Heart left ventricle (tissue), 16 donors: ENCODE measurements at regions of chr7 and their contacts with region 1.

Region 1: GRCh38 chr7:41940760-41941343 is 238.0 kb upstream of the INHBA start:
- DNase-seq: peak in 4 of 5 donors; percentile 57 to 61 (median 58)
- ATAC-seq: peak; percentile 70 to 86 (median 82)
- H3K4me3 ChIP-seq: no peak overlapping the region
- H3K27ac ChIP-seq: no peak overlapping the region
- H3K4me1 ChIP-seq: peaks cover 0 to 13% (median 5%) of the 10 kb centered on the region in 12 donors
- H3K27me3 ChIP-seq: peaks cover 0 to 18% (median 9%) of the 10 kb centered on the region in 9 donors
- CTCF ChIP-seq: peak; percentile 83 to 96 (median 90)
- POLR2A ChIP-seq: peak in 1 of 2 donors; percentile 3

Region 2: GRCh38 chr7:41900532-41900931 is 40.3 kb before region 1 on chr7:
- intact Hi-C with region 1: no loop called
- DNase-seq: no peak
- ATAC-seq: no peak
- H3K4me3 ChIP-seq: no peak overlapping the region
- H3K27ac ChIP-seq: no peak overlapping the region
- H3K4me1 ChIP-seq: no peaks in the 10 kb centered on the region
- H3K27me3 ChIP-seq: no peaks in the 10 kb centered on the region
- CTCF ChIP-seq: no peak
- POLR2A ChIP-seq: no peak

Region 3: GRCh38 chr7:42311195-42311594 is 370.3 kb after region 1 on chr7:
- intact Hi-C with region 1: loop called in 1 of 10 experiments (anchors 10 kb)
- DNase-seq: no peak
- ATAC-seq: no peak
- H3K4me3 ChIP-seq: no peak overlapping the region
- H3K27ac ChIP-seq: no peak overlapping the region
- H3K4me1 ChIP-seq: peaks cover 0 to 2% (median 0%) of the 10 kb centered on the region in 12 donors
- H3K27me3 ChIP-seq: no peaks in the 10 kb centered on the region
- CTCF ChIP-seq: no peak
- POLR2A ChIP-seq: no peak

Region 4: GRCh38 chr7:42574685-42575084 is 633.8 kb after region 1 on chr7:
- intact Hi-C with region 1: loop called in 2 of 10 experiments (anchors 10 kb)
- DNase-seq: no peak
- ATAC-seq: no peak
- H3K4me3 ChIP-seq: no peak overlapping the region
- H3K27ac ChIP-seq: peak overlapping the region in 1 of 12 donors; percentile 48
- H3K4me1 ChIP-seq: no peaks in the 10 kb centered on the region
- H3K27me3 ChIP-seq: no peaks in the 10 kb centered on the region
- CTCF ChIP-seq: peak in 4 of 12 donors; percentile 7 to 23 (median 19)
- POLR2A ChIP-seq: no peak

Region 5: GRCh38 chr7:42690794-42691639 is 750.2 kb after region 1 on chr7:
- intact Hi-C with region 1: loop called in 7 of 10 experiments (anchors 2 to 10 kb)
- DNase-seq: no peak
- ATAC-seq: peak; percentile 54 to 80 (median 64)
- H3K4me3 ChIP-seq: no peak overlapping the region
- H3K27ac ChIP-seq: peak overlapping the region in 1 of 12 donors; percentile 63
- H3K4me1 ChIP-seq: peaks cover 0 to 11% (median 3%) of the 10 kb centered on the region in 12 donors
- H3K27me3 ChIP-seq: no peaks in the 10 kb centered on the region
- CTCF ChIP-seq: peak; percentile 16 to 52 (median 34)
- POLR2A ChIP-seq: no peak

Region 6: DNA sequence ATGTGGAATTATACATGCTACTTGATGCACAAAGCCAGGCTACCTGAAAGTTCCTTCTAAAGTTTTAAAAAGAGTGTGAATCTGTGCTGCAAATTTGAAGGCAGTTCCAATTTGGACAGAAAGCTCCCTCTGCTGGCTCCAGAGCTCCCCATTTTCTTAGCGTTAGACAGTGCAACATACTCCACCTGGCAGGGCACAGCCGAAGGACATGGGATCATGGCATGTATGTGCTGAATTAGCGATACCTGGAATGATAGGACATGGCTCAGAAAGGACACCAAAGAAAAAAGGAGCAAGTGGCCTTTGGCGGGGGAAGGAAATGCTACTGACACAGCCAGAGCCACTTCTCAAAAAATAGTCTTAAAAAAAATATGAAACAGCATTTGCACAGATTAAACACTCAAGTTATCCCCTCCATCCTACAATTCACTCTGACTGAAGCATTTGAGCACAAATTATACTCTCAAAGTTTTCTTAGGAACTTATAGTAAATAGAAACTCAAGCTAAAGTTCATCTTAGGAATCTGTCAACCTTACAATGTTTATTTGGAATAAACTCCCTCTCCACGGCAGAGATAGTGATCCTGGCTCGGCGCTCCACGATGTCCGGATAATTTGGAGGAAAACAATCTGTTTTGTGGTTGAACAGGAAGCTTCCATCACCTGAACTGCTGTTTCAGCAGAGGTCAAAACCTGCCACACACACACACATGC is 891.0 kb after region 1 on chr7:
- intact Hi-C with region 1: loop called in 7 of 10 experiments (anchors 1 to 5 kb)
- DNase-seq: peak in 4 of 5 donors; percentile 21 to 42 (median 34)
- ATAC-seq: peak; percentile 42 to 75 (median 72)
- H3K4me3 ChIP-seq: no peak overlapping the region
- H3K27ac ChIP-seq: peak overlapping the region in 1 of 12 donors; percentile 18
- H3K4me1 ChIP-seq: peaks cover 0 to 9% (median 1%) of the 10 kb centered on the region in 12 donors
- H3K27me3 ChIP-seq: peaks cover 0 to 7% (median 0%) of the 10 kb centered on the region in 9 donors
- CTCF ChIP-seq: peak; percentile 29 to 81 (median 64)
- POLR2A ChIP-seq: no peak

Region 7: DNA sequence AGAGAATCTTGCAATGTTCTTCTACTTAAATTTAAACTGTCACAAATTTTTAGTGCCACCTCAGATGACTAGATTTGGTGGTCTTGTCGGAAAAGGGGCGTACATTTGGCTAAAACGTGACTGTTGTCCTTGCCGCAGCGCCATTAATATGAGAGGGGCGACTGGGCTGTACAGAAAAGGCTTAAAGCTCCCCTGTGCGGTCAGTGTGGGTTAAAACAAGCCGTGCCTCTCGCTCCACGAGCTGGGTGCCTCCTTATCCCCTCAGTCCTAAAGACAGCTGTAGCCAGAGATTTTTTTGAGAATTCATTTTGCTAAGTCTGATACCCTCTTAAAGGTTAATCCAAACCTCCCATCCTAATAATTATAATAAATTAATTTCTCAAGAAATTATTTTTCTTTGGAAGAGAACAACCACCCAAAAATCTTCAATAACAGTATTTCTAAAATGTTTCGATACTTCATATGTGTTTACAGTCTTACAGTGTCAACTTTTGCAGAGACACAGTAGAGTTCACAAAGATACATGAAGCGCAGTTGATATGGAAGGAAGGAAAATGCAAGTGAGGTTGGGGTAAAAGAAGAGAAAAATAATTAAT is 902.5 kb after region 1 on chr7:
- intact Hi-C with region 1: loop called in 5 of 10 experiments (anchors 5 kb)
- DNase-seq: peak in 4 of 5 donors; percentile 29 to 42 (median 37)
- ATAC-seq: peak; percentile 67 to 90 (median 84)
- H3K4me3 ChIP-seq: peak overlapping the region in 7 of 12 donors; percentile 0 to 40 (median 22)
- H3K27ac ChIP-seq: no peak overlapping the region
- H3K4me1 ChIP-seq: peaks cover 0 to 5% (median 0%) of the 10 kb centered on the region in 12 donors
- H3K27me3 ChIP-seq: peaks cover 0 to 9% (median 0%) of the 10 kb centered on the region in 9 donors
- CTCF ChIP-seq: peak; percentile 35 to 65 (median 52)
- POLR2A ChIP-seq: no peak

Region 8: DNA sequence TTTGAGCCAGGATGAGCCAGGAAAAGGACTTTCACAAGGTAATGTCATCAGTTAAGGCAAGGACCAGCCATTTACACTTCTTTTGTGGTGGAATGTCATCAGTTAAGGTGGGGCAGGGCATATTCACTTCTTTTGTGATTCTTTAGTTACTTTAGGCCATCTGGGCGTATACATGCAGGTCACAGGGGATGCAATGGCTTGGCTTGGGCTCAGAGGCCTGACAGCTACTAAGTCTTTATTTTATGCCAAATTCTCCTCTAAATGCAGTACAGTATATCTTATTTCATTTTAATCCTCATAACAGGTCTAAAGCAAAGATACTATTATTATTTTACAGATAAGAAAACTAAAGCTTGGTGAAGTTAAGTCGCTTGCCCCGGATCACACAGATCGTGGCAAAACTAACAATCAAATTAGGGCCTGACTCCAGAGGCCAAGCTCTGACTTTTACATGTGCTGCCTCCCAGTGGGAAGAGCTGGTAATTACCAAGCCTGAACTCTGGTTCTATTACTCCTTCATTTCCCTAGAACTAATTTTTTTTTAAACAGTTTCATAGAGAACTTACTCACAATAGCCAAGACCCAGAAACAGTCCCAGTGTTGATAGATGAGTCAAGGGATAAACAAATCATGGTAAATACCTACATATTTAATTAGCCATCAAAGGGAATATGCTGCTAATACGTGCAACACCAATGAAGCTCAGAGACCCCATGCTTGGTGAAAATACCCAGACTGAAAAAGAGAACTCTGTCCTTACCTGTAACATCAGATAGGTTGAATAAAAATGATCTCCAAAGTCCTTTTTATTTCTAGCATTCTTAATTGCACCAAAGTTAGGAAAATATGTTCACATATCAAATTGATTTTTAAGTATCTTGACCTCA is 935.6 kb after region 1 on chr7:
- intact Hi-C with region 1: loop called in 3 of 10 experiments (anchors 1 to 2 kb)
- DNase-seq: peak in 2 of 5 donors; percentile 29 to 42
- ATAC-seq: peak in 3 of 4 donors; percentile 44 to 59 (median 47)
- H3K4me3 ChIP-seq: no peak overlapping the region
- H3K27ac ChIP-seq: no peak overlapping the region
- H3K4me1 ChIP-seq: no peaks in the 10 kb centered on the region
- H3K27me3 ChIP-seq: no peaks in the 10 kb centered on the region
- CTCF ChIP-seq: peak; percentile 53 to 87 (median 72)
- POLR2A ChIP-seq: no peak